Sigmoid colon (tissue), 7 donors: ENCODE measurements at regions of chr6 and their contacts with region 1.

Region 1: DNA sequence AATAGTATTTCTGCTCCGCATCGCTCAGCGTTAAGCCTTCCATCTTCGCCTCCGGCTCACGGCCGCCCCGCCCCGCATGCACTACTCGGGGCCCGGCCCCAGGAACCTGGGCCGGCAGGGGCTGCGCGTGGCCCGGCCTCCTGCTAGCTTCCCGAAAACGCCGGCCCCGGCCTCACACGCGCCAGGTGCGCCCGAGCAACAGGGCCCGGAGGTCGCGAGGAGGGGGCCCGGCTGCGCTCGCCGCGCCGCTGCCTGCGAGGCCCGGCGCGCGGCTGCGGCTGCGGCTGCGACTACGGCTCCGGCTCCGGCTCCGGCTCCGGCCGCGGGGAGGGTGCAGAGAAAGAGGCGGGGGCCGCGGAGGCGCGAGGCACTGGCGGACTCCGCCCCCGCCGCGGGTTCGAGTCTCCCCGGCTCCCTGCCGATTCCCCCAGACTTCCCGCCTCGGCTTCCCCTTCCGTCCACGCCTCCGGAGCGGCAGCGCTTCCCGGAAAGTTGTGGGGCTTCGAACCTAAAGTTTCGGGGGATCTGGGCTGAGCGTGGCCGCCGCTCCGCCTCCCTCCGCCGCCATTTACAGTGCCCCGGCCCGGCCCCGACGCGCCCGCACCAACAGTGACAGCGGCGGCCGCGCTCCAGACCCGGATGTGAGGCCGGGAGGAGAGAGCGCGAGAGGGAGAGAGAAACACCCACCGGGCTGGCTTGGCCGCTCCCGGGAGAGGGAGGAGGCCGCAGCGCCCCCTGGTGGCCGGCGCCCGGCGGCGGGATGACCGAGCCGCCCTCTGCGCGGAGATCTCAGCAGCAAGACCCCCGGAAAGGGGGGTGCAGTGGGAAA is at the start of gene REPS1:
- DNase-seq: peak; percentile 96
- H3K4me3 ChIP-seq: peak within 1 kb of the TSS; percentile 88 to 98 (median 94)
- H3K27ac ChIP-seq: peak within 1 kb of the TSS; percentile 88 to 91 (median 88)
- H3K4me1 ChIP-seq: peaks cover 0 to 44% (median 34%) of the 10 kb centered on the region in 4 donors
- H3K27me3 ChIP-seq: no peaks in the 10 kb centered on the region
- CTCF ChIP-seq: peak; percentile 73 to 98 (median 92)
- EP300 ChIP-seq: no peak
- POLR2A ChIP-seq: peak; percentile 50 to 70
- total RNA-seq, gene REPS1: 26.3 to 53.7 (median 27.9) TPM

Region 2: DNA sequence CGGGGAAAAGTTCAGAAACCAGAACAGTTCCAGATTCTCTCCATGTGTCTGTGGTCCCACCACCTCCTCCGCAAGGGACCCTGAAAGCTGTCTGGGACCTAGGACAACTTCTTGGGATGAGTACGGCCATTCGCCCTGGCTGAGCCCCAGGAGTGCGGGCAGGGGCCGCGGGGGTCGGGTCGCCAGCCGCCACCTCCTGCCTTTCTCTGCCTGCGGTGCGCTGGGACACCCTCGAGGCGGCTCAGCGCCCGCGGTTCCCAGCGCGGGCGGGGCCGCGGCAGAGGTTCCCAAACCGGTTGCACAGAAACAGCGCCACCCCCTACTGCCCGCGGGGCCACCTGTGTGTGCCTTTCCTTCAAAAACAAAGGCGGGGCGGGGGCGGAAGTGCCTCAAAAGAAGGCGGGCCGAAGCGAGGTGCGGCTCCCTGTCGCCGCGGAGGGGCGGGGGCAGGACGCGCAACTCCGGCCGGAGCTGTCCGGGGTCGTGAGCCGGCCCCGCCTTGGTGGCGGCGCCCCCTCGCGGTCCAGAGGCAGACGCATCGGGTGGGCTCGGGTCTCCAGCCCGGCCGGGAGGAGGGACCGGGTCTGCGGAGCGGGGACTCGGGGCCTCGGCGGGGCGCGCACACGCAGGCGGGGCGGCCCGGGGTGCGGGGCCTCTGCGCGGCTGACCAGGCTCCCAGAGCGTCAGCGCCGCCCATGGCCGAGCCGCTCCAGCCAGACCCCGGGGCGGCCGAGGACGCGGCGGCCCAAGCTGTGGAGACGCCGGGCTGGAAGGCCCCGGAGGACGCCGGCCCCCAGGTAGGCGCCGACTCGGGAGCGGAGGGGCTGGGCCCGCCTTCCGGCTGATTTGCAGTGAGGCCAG is 583.8 kb before region 1 on chr6 and contains the start of gene HEBP2:
- intact Hi-C with region 1: loop called (anchors 10 kb)
- DNase-seq: peak; percentile 96
- H3K4me3 ChIP-seq: peak within 1 kb of the TSS; percentile 66 to 95 (median 76)
- H3K27ac ChIP-seq: peak within 1 kb of the TSS; percentile 90 to 94 (median 92)
- H3K4me1 ChIP-seq: peaks cover 0 to 15% (median 11%) of the 10 kb centered on the region in 4 donors
- H3K27me3 ChIP-seq: no peaks in the 10 kb centered on the region
- CTCF ChIP-seq: peak in 1 of 4 experiments; percentile 44
- EP300 ChIP-seq: no peak
- POLR2A ChIP-seq: peak; percentile 35 to 63
- total RNA-seq, gene HEBP2: 46.3 to 75.3 (median 65.5) TPM

Region 3: GRCh38 chr6:138817822-138818308 is 170.0 kb before region 1 on chr6:
- intact Hi-C with region 1: loop called (anchors 1 kb)
- DNase-seq: no peak
- H3K4me3 ChIP-seq: no peak overlapping the region
- H3K27ac ChIP-seq: no peak overlapping the region
- H3K4me1 ChIP-seq: peaks cover 0 to 6% (median 0%) of the 10 kb centered on the region in 4 donors
- H3K27me3 ChIP-seq: no peaks in the 10 kb centered on the region
- CTCF ChIP-seq: no peak
- EP300 ChIP-seq: no peak
- POLR2A ChIP-seq: no peak

Region 4: DNA sequence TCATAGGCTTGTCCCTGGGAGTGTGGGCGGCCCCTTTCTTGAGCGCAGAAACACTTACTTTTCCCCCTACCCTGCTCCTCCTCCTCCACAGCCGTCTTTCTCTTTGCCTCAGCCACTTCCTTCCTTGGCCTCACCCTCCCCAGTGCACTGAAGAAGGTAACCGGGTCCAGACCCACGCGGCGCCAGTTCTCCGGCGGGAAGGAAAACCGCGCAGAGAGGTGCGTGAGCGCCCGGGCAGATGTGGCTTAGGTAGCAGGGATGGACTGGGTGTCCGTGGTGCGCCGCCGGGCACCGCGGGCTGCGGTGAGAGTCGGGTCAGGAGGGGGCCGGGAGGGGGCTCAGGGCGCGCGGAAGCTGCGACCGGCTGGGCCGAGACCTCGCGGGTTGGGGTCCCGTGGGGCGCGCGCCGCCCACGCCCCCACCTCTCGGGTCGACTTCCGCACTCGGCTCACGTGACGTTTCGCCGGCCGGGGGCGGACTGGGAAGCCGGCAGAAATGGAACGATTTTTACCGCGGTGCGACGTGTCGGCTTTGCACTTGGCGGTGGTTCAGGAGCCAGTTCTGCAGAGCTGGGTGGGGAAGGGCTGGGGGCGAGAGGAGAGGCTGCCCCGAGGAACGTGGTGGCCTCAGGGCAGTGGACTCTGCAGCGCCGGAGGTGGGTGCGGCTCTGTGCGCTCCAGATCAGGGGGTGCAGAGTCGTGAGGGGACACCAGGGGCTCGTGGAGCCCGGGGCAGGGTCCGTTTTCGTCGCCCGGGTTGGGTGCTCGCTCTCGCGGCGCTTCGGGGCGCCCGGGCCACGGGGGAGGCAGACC is 41.0 kb after region 1 on chr6 and contains the start of gene ABRACL:
- intact Hi-C with region 1: loop called (anchors 2 kb)
- DNase-seq: peak; percentile 81
- H3K4me3 ChIP-seq: peak within 1 kb of the TSS; percentile 74 to 96 (median 88)
- H3K27ac ChIP-seq: peak within 1 kb of the TSS; percentile 77 to 92 (median 86)
- H3K4me1 ChIP-seq: peaks cover 0 to 20% (median 8%) of the 10 kb centered on the region in 4 donors
- H3K27me3 ChIP-seq: no peaks in the 10 kb centered on the region
- CTCF ChIP-seq: no peak
- EP300 ChIP-seq: no peak
- POLR2A ChIP-seq: no peak
- total RNA-seq, gene ABRACL: 6.8 to 7.7 (median 7.4) TPM

Region 5: GRCh38 chr6:139134817-139135581 is 147.1 kb after region 1 on chr6 and contains the start of gene HECA:
- intact Hi-C with region 1: loop called (anchors 5 kb)
- DNase-seq: peak; percentile 99
- H3K4me3 ChIP-seq: peak within 1 kb of the TSS; percentile 78 to 98 (median 94)
- H3K27ac ChIP-seq: peak within 1 kb of the TSS; percentile 89 to 98 (median 96)
- H3K4me1 ChIP-seq: peaks cover 0 to 42% (median 32%) of the 10 kb centered on the region in 4 donors
- H3K27me3 ChIP-seq: no peaks in the 10 kb centered on the region
- CTCF ChIP-seq: no peak
- EP300 ChIP-seq: no peak
- POLR2A ChIP-seq: peak in 1 of 2 donors; percentile 14
- total RNA-seq, gene HECA: 33.5 to 42.1 (median 35.6) TPM

Region 6: GRCh38 chr6:139364302-139364981 is 376.6 kb after region 1 on chr6:
- intact Hi-C with region 1: loop called (anchors 2 kb)
- DNase-seq: no peak
- H3K4me3 ChIP-seq: no peak overlapping the region
- H3K27ac ChIP-seq: no peak overlapping the region
- H3K4me1 ChIP-seq: peaks cover 0 to 11% (median 6%) of the 10 kb centered on the region in 4 donors
- H3K27me3 ChIP-seq: no peaks in the 10 kb centered on the region
- CTCF ChIP-seq: peak; percentile 59 to 77 (median 69)
- EP300 ChIP-seq: no peak
- POLR2A ChIP-seq: no peak